Aorta (tissue), 5 donors: ENCODE measurements at regions of chr1 and their contacts with region 1.

Region 1: GRCh38 chr1:228004331-228004855 is 2.4 kb upstream of the WNT3A start:
- DNase-seq: peak in 1 of 2 donors; percentile 53
- ATAC-seq: no peak
- H3K4me3 ChIP-seq: no peak overlapping the region
- H3K27ac ChIP-seq: no peak overlapping the region
- H3K4me1 ChIP-seq: no peaks in the 10 kb centered on the region
- H3K27me3 ChIP-seq: peaks cover 0 to 2% of the 10 kb centered on the region in 2 donors

Region 2: DNA sequence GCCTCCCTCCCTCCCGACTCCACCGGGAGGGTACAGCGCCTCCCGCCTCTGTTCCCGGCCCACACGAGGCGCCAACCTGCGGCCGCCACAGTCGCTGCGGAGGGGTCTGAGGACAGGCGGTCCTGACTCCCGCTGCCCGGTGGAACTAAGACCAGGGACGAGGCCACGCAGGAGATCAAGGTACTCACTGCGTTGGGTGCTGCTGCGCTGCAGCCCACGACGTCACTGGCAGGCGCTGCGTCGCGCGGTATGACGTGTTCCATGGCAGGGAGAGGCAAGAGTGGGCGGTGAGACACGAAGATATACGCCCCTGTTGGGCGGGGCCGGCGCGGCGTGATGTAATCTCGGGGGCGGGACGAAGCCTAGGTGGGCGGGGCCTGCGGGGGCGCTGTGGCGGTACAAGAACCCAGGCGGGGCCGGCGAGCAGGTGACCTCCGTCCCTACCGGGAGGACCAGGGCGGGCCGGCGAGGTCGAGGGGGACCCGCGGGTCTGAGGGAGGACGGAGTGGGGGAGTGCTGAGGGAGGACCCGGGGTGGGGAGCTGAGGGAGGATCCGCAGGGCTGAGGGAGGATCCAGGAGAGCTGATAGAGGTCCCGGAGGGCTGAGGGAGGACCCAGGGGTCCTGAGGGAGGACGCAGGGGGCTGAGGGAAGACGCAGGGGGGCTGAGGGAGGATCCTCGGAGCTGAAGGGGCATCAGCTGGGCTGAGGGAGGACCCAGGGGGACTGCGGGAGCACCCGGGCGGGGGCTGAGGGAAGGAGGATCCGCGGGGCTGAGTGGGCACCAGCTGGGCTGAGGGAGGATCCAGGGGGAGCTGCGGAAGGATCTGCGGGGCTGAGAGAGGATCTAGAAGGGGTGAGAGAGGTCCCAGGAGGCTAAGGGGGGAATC is 104.9 kb after region 1 on chr1 and contains the start of gene MRPL55:
- intact Hi-C with region 1: loop called in 1 of 2 experiments (anchors 5 kb)
- DNase-seq: peak; percentile 97 to 99
- ATAC-seq: peak; percentile 99
- H3K4me3 ChIP-seq: peak within 1 kb of the TSS; percentile 36 to 69
- H3K27ac ChIP-seq: peak within 1 kb of the TSS in 1 of 2 donors; percentile 66
- H3K4me1 ChIP-seq: no peaks in the 10 kb centered on the region
- H3K27me3 ChIP-seq: no peaks in the 10 kb centered on the region
- total RNA-seq, gene MRPL55: 27.4 to 35.4 TPM